ENCODE measurements at regions of chr3 and their contacts with region 1.

Region 1: DNA sequence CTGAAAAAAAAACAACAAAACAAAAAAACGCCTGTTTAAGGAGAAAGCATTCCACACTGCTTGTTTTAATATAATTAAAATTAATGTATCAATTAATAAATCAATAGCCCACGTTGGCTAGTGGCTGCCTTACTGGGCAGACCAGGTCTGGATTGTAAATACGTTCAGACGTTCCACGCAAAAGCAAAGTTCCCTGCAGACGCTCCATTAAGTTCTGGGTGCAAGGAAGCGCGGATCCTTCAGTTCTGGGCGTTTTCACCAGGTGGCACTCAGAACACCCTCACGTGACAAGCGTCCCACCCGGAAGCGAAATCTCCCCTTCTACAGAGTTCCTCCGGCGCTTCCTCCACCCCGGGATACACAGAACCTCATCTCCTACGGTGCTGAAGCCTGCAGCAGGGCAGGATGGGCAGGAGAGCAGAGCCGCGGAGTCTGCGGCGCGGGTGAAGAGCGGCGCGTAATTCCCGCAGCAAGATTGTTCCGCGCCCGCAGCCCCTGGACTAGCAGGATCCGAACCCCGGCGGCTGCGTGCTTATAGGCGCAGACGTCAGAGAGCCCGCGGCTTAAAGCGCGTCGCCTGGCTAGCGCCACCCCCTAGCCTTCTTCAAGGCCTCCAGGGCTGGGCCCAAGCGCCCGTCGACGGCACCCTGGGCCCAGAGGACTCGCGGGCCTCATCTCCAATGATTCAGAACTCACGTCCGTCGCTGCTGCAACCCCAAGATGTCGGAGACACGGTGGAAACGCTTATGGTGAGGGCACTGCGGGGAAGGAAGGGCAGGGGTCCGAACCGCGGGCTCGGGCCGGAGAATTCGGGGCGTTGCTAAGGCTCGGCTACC is at the start of gene SLC25A38:
- DNase-seq: peak; percentile 72
- ATAC-seq: peak; percentile 73
- H3K4me3 Mint-ChIP-seq: peak within 1 kb of the TSS; percentile 99
- H3K27ac Mint-ChIP-seq: peak within 1 kb of the TSS; percentile 100
- H3K4me1 Mint-ChIP-seq: peaks cover 49% of the 10 kb centered on the region
- H3K27me3 Mint-ChIP-seq: no peaks in the 10 kb centered on the region
- CTCF ChIP-seq: no peak
- total RNA-seq, gene SLC25A38: 51.6 and 52.9 TPM in 2 replicates

Region 2: GRCh38 chr3:39051647-39052561 is 331.4 kb before region 1 on chr3 and contains the starts of genes SCN11A and WDR48:
- CTCF ChIA-PET with region 1: no interaction called
- POLR2A ChIA-PET with region 1: no interaction called
- intact Hi-C with region 1: loop called (anchors 2 kb)
- DNase-seq: peak; percentile 80
- ATAC-seq: peak; percentile 94
- H3K4me3 Mint-ChIP-seq: peak within 1 kb of the TSS; percentile 97
- H3K27ac Mint-ChIP-seq: peak within 1 kb of the TSS; percentile 98
- H3K4me1 Mint-ChIP-seq: peaks cover 39% of the 10 kb centered on the region
- H3K27me3 Mint-ChIP-seq: no peaks in the 10 kb centered on the region
- CTCF ChIP-seq: no peak
- total RNA-seq, gene SCN11A: 0.16 and 0.20 TPM in 2 replicates
- total RNA-seq, gene WDR48: 47.7 and 48.9 TPM in 2 replicates

Region 3: GRCh38 chr3:39180546-39181346 is 202.5 kb before region 1 on chr3:
- CTCF ChIA-PET with region 1: no interaction called
- POLR2A ChIA-PET with region 1: interaction called, 3 read pairs
- intact Hi-C with region 1: loop called (anchors 2 kb)
- DNase-seq: peak; percentile 88
- ATAC-seq: peak; percentile 89
- H3K4me3 Mint-ChIP-seq: peak overlapping the region; percentile 73
- H3K27ac Mint-ChIP-seq: peak overlapping the region; percentile 77
- H3K4me1 Mint-ChIP-seq: peaks cover 31% of the 10 kb centered on the region
- H3K27me3 Mint-ChIP-seq: no peaks in the 10 kb centered on the region
- CTCF ChIP-seq: no peak

Region 4: DNA sequence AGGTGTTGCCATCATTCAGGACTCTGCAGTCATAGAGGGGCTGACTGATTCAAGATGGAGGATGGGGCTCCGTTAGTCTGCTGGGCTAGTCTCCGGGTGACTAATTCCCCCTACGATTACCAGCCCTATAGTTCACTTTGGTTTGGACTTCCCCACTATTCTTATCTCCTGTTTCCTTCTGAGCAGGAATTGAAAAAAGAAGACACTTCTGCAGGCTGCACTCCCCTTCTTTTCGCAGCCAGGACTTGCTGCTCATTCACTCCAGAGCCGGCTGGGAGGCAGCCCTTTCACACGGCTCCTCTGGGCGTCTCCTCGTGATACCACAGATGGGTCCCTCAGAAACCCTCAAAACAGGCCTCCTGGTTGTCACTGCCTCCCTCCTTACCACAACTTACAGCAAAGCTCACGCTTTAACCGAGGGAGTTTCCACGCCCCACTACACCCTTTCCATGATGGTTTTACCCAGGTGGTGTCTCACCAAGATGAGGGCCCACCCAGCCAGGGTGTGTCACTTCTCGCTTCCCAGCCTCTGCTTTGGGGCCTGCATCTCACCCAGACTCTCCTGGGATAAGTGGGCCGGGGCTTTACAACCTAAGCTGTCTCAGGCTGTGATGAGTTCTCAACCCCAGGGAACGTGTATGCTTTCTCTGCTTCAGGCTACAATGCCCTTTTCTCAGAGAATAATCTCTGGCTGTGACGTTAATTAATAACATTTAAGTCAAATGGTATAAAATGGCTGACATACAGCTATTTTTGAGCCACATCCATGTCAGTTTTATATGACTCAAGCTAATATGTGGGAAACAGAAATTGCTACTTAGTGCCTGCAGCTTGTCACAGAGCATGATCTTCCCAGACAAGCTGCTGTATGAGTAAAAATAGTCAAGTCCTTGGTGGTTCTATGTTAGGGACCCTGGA is 115.4 kb before region 1 on chr3:
- CTCF ChIA-PET with region 1: no interaction called
- POLR2A ChIA-PET with region 1: no interaction called
- intact Hi-C with region 1: no loop called
- DNase-seq: no peak
- ATAC-seq: no peak
- H3K4me3 Mint-ChIP-seq: no peak overlapping the region
- H3K27ac Mint-ChIP-seq: no peak overlapping the region
- H3K4me1 Mint-ChIP-seq: peaks cover 41% of the 10 kb centered on the region
- H3K27me3 Mint-ChIP-seq: no peaks in the 10 kb centered on the region
- CTCF ChIP-seq: no peak

Region 5: GRCh38 chr3:39302178-39302577 is 81.1 kb before region 1 on chr3:
- CTCF ChIA-PET with region 1: no interaction called
- POLR2A ChIA-PET with region 1: no interaction called
- intact Hi-C with region 1: no loop called
- DNase-seq: no peak
- ATAC-seq: no peak
- H3K4me3 Mint-ChIP-seq: no peak overlapping the region
- H3K27ac Mint-ChIP-seq: no peak overlapping the region
- H3K4me1 Mint-ChIP-seq: no peaks in the 10 kb centered on the region
- H3K27me3 Mint-ChIP-seq: peaks cover 40% of the 10 kb centered on the region
- CTCF ChIP-seq: no peak

Region 6: DNA sequence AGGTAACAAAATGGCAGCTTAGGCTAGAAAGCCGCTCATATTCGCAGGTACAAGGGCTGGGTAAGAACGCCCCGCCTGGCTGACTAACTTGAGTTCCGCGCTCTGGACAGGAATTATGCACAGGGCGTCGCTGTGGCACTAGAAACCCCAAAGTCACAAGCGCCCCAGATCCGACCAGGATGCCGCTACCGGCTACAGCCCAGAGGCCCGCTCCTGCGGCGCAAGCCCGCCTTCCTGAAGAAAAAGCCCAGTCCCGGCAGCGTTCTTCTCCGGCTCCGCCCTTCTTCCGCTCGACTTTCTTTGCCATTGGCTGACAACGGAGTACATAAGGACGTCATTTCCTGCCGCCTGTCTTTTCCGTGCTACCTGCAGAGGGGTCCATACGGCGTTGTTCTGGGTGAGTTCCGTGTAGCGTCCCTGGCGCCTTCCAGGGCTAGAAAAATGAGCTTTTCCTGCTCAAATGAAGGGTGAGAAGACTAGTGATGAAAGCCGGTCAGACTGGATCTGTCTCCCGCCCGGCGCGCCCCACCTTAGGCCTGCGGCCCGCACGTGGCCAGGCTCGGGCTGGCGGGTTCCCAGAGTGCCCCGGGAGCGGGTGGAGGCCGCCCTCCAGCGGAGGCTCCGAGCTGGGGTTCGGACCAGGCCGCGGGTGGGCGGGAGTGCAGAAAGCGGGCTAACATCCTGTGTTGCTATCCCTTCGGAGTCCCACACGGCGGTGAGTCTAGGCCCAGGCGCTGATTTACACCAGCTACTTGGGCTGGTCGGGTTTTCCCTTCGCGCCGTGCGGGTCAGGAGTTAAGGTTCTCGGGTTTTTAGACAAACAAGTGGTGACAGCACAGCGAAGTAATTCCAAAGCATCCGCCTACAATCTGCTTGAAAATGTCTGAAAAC is 23.4 kb after region 1 on chr3 and contains the start of gene RPSA:
- CTCF ChIA-PET with region 1: interaction called, 16 read pairs
- POLR2A ChIA-PET with region 1: interaction called, 101 read pairs
- intact Hi-C with region 1: loop called (anchors 1 kb)
- DNase-seq: peak; percentile 80
- ATAC-seq: peak; percentile 90
- H3K4me3 Mint-ChIP-seq: peak within 1 kb of the TSS; percentile 94
- H3K27ac Mint-ChIP-seq: peak within 1 kb of the TSS; percentile 96
- H3K4me1 Mint-ChIP-seq: peaks cover 48% of the 10 kb centered on the region
- H3K27me3 Mint-ChIP-seq: no peaks in the 10 kb centered on the region
- CTCF ChIP-seq: no peak
- total RNA-seq, gene RPSA: 2,697 and 2,952 TPM in 2 replicates

Region 7: DNA sequence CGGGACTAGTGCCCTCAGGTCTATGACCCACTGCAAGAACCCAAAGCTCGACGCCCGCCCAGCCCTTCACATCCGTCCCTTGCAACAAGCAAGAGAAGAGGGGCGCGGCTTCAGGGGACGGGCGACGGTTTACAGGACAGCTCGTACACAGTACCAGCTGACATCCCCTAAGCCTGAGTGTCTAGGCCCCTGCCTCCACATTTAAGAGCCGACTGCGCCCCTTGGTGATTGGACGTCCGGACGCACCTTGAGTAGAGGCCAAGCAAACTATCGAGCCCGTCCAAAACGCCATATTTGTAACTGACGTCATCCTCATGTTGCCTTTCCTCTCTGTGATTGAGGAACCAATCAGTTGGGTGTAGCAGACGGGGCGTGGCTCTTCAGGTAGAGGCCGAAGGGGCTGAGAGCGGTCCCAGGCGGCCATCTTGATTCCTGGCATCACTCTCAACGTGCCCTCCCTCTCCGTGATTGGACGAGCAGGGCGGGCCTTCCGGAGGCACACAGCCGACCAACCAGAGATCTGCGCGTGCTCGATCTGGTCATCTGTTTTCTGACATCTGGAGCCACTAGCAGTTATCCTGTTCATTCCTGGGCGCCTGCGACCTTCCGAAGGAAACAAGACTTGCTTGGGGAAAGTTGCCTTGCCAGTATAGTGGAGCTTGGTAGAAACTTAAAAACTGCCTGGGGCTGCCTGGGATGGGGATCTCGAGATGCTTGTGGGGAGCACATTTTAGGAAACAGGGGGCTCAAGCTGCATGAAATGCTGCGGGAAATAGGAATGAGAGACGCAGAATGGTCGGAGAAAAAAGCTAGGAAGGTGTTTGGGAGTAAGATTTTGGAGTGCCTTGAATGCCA is 1069.8 kb after region 1 on chr3:
- CTCF ChIA-PET with region 1: no interaction called
- POLR2A ChIA-PET with region 1: no interaction called
- intact Hi-C with region 1: loop called (anchors 10 kb)
- DNase-seq: peak; percentile 81
- ATAC-seq: peak; percentile 92
- H3K4me3 Mint-ChIP-seq: peak overlapping the region; percentile 96
- H3K27ac Mint-ChIP-seq: peak overlapping the region; percentile 98
- H3K4me1 Mint-ChIP-seq: peaks cover 36% of the 10 kb centered on the region
- H3K27me3 Mint-ChIP-seq: no peaks in the 10 kb centered on the region
- CTCF ChIP-seq: no peak